ENCODE measurements at regions of chr18 and their contacts with region 1.

Region 1: DNA sequence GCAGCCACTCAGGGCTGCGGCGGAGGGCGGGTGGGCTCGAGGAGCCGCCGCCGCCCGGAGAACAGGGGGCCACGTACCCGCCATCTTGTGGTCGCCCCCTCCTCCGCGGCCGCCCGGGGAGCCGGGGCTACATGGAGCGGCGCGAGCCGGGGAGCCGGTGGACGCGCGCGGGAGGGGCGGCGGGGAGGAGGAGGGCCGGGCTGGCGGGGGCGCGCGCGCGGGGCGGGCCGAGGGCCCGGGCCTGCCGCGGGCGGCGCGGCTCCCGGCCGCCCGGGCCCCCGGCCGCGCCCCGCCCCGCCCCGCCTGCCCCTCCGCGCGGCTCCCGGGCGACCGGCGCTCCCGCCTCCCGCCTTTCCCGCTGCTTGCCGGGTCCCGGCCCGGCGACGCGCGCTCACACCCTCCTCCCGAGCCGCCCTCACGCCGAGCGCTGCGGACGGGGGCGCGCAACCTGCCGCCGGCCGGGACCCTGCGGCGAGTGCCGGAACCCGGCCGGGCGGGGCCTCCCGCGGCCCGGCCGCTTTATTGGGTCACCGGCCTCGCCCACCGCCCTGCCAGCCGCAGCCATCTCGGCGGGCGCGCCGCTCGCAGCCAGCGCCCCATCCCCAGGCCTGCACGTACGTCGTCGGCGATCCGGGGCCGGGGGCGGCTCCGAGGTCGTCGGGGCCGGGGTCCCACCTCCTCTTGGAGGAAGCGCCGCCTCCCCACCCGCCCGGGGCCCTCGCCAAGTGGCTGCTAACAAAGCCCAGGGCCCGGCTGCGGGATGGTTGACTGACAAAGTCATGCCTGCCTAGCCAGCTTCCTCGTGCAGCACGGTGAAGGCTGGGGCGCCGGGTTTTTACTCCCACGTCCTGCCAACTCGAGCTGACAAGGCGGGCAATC is at the start of gene PPP4R1:
- DNase-seq: peak; percentile 28 to 86
- H3K4me3 ChIP-seq: peak within 1 kb of the TSS; percentile 71 to 89
- H3K27ac ChIP-seq: peak within 1 kb of the TSS; percentile 95 to 98
- H3K4me1 ChIP-seq: peaks cover 11 to 23% of the 10 kb centered on the region in 2 donors
- H3K27me3 ChIP-seq: no peaks in the 10 kb centered on the region
- CTCF ChIP-seq: no peak
- total RNA-seq, gene PPP4R1: 34.4 TPM

Region 2: DNA sequence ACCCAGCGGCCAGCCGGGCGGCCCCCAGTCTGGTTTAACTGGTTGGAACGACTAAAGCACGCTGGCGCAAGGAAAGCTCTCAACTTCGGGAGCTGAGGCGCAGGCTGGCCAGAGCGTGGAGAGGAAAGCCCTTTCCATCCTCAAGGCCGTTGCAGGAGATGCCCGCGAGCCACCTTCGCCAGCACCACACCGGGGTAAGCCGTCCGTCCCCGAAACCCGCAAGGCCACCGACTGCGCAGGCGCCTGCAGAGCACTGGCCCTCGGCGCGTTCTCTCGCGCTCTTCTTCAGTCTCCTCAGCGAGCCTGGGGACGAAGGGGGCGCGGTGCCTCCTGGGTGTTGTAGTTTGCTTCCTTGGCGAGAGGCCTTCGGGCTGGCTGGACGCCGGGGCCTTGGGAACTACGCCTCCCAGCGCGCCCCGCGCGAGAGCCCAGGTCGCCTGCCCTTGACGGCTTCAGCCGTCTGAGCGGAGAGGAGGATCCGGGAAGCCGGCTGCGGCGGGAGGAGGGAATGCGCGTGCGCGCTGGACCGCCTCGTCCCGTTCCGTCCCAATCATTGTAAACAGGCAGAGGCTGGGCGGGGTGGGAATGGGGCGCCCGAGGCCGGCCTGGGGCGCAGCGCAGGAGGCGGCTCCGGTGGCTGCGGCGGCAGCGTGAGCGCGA is 139.5 kb before region 1 on chr18 and contains the start of gene RALBP1:
- intact Hi-C with region 1: loop called (anchors 10 kb)
- DNase-seq: peak; percentile 97 to 100
- H3K4me3 ChIP-seq: peak within 1 kb of the TSS; percentile 95 to 98
- H3K27ac ChIP-seq: peak within 1 kb of the TSS; percentile 88 to 90
- H3K4me1 ChIP-seq: peaks cover 0 to 5% of the 10 kb centered on the region in 2 donors
- H3K27me3 ChIP-seq: no peaks in the 10 kb centered on the region
- CTCF ChIP-seq: peak in 1 of 3 experiments; percentile 35
- total RNA-seq, gene RALBP1: 67.2 TPM

Region 3: GRCh38 chr18:9586814-9587213 is 27.8 kb before region 1 on chr18:
- intact Hi-C with region 1: no loop called
- DNase-seq: no peak
- H3K4me3 ChIP-seq: no peak overlapping the region
- H3K27ac ChIP-seq: no peak overlapping the region
- H3K4me1 ChIP-seq: no peaks in the 10 kb centered on the region
- H3K27me3 ChIP-seq: no peaks in the 10 kb centered on the region
- CTCF ChIP-seq: no peak

Region 4: DNA sequence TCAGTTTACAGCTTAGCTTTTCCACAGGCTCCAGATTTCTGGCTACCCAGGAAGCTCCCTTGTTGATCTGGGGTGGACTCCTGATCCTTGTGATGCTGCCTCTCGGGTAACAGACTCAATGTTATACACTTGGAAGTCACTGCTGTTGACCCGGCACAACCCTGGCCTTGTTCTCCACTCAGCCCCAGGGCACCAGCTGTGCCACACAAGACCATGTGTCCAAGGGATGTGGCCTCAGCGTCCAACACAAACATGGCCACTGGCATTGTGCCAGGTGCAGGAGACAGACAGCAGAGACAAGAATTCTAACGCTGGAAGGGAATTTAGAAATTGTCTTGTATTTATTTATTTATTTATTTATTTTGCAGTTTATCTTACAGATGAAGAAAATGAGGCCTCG is 38.8 kb after region 1 on chr18:
- intact Hi-C with region 1: loop called (anchors 2 kb)
- DNase-seq: peak; percentile 44 to 86
- H3K4me3 ChIP-seq: no peak overlapping the region
- H3K27ac ChIP-seq: peak overlapping the region in 1 of 2 donors; percentile 44
- H3K4me1 ChIP-seq: peaks cover 0 to 4% of the 10 kb centered on the region in 2 donors
- H3K27me3 ChIP-seq: no peaks in the 10 kb centered on the region
- CTCF ChIP-seq: no peak

Region 5: GRCh38 chr18:9708057-9708433 is 93.4 kb after region 1 on chr18 and contains the start of gene RAB31:
- intact Hi-C with region 1: loop called (anchors 1 kb)
- DNase-seq: peak; percentile 70 to 92
- H3K4me3 ChIP-seq: peak within 1 kb of the TSS; percentile 78 to 81
- H3K27ac ChIP-seq: peak within 1 kb of the TSS; percentile 89 to 99
- H3K4me1 ChIP-seq: peaks cover 0 to 33% of the 10 kb centered on the region in 2 donors
- H3K27me3 ChIP-seq: no peaks in the 10 kb centered on the region
- CTCF ChIP-seq: no peak
- total RNA-seq, gene RAB31: 36.8 TPM

Region 6: GRCh38 chr18:9824474-9824832 is 209.8 kb after region 1 on chr18:
- intact Hi-C with region 1: loop called (anchors 5 kb)
- DNase-seq: peak in 1 of 2 donors; percentile 83
- H3K4me3 ChIP-seq: no peak overlapping the region
- H3K27ac ChIP-seq: peak overlapping the region; percentile 42 to 66
- H3K4me1 ChIP-seq: peaks cover 14 to 35% of the 10 kb centered on the region in 2 donors
- H3K27me3 ChIP-seq: no peaks in the 10 kb centered on the region
- CTCF ChIP-seq: no peak

Region 7: GRCh38 chr18:9925369-9925768 is 310.7 kb after region 1 on chr18:
- intact Hi-C with region 1: loop called (anchors 5 kb)
- DNase-seq: no peak
- H3K4me3 ChIP-seq: peak overlapping the region; percentile 2 to 27
- H3K27ac ChIP-seq: peak overlapping the region; percentile 64 to 80
- H3K4me1 ChIP-seq: peaks cover 0 to 61% of the 10 kb centered on the region in 2 donors
- H3K27me3 ChIP-seq: no peaks in the 10 kb centered on the region
- CTCF ChIP-seq: no peak

Measured in ascending aorta (tissue), 2 donors.